ENCODE measurements at regions of chr2 and their contacts with region 1.

Region 1: GRCh38 chr2:166134252-166135151 is 6.7 kb upstream of the SCN1A start:
- DNase-seq: peak; percentile 100
- ATAC-seq: peak; percentile 97
- H3K4me3 ChIP-seq: peak overlapping the region in 2 of 3 experiments; percentile 28 to 42; a peak in 3 of 6 replicates
- H3K27ac ChIP-seq: peak overlapping the region; percentile 97
- H3K4me1 ChIP-seq: peaks cover 94% of the 10 kb centered on the region
- H3K27me3 ChIP-seq: no peaks in the 10 kb centered on the region
- CTCF ChIP-seq: no peak
- EP300 ChIP-seq: peak in 1 of 2 experiments; percentile 99; a peak in 3 of 4 replicates
- POLR2A ChIP-seq: peak; percentile 41 to 86; a peak in 3 of 4 replicates
- RAD21 ChIP-seq: no peak

Region 2: GRCh38 chr2:165474619-165475276 is 659.8 kb before region 1 on chr2:
- CTCF ChIA-PET with region 1: no interaction called
- POLR2A ChIA-PET with region 1: no interaction called
- in situ Hi-C with region 1: no loop called
- intact Hi-C with region 1: no loop called
- DNase-seq: no peak
- ATAC-seq: no peak
- H3K4me3 ChIP-seq: no peak overlapping the region
- H3K27ac ChIP-seq: no peak overlapping the region
- H3K4me1 ChIP-seq: no peaks in the 10 kb centered on the region
- H3K27me3 ChIP-seq: no peaks in the 10 kb centered on the region
- CTCF ChIP-seq: no peak
- EP300 ChIP-seq: no peak
- POLR2A ChIP-seq: no peak
- RAD21 ChIP-seq: no peak

Region 3: GRCh38 chr2:166158546-166158945 is 24.0 kb after region 1 on chr2:
- CTCF ChIA-PET with region 1: interaction called, 4 read pairs
- POLR2A ChIA-PET with region 1: interaction called, 198 read pairs
- in situ Hi-C with region 1: no loop called
- intact Hi-C with region 1: loop called (anchors 1 kb)
- DNase-seq: no peak
- ATAC-seq: no peak
- H3K4me3 ChIP-seq: no peak overlapping the region
- H3K27ac ChIP-seq: no peak overlapping the region
- H3K4me1 ChIP-seq: peaks cover 71% of the 10 kb centered on the region
- H3K27me3 ChIP-seq: no peaks in the 10 kb centered on the region
- CTCF ChIP-seq: no peak
- EP300 ChIP-seq: no peak
- POLR2A ChIP-seq: no peak
- RAD21 ChIP-seq: no peak

Region 4: GRCh38 chr2:166163775-166164174 is 29.3 kb after region 1 on chr2:
- CTCF ChIA-PET with region 1: no interaction called
- POLR2A ChIA-PET with region 1: interaction called, 15 read pairs
- in situ Hi-C with region 1: no loop called
- intact Hi-C with region 1: no loop called
- DNase-seq: peak; percentile 76
- ATAC-seq: peak; percentile 95
- H3K4me3 ChIP-seq: no peak overlapping the region
- H3K27ac ChIP-seq: peak overlapping the region; percentile 46
- H3K4me1 ChIP-seq: peaks cover 37% of the 10 kb centered on the region
- H3K27me3 ChIP-seq: no peaks in the 10 kb centered on the region
- CTCF ChIP-seq: no peak
- EP300 ChIP-seq: peak in 1 of 2 experiments; percentile 69; a peak in 1 of 4 replicates
- POLR2A ChIP-seq: no peak
- RAD21 ChIP-seq: no peak

Region 5: DNA sequence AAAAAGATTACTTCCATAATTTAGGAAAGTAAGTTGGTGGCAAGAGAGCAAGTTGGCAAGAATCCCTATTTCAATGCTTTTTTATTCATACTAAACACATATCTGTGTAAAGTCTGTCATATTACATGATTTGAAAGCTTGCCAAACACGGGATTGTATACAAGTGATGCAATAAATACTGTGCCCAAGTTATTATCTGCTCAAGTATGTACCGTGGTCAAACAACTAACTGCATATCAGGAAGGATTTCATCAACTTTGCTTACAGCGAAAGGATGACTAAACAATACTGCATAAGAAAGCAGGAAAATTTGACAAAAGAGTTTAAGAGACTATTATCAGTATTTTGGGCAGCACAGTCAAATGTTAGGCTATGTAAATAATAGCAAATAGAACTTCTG is 62.9 kb after region 1 on chr2:
- CTCF ChIA-PET with region 1: no interaction called
- POLR2A ChIA-PET with region 1: no interaction called
- in situ Hi-C with region 1: no loop called
- intact Hi-C with region 1: no loop called
- DNase-seq: peak; percentile 20
- ATAC-seq: no peak
- H3K4me3 ChIP-seq: no peak overlapping the region
- H3K27ac ChIP-seq: no peak overlapping the region
- H3K4me1 ChIP-seq: 0 out of 2 replicates have a peak, but pooled peaks cover 5% of the 10 kb centered on the region
- H3K27me3 ChIP-seq: no peaks in the 10 kb centered on the region
- CTCF ChIP-seq: no peak
- EP300 ChIP-seq: no peak
- POLR2A ChIP-seq: no peak
- RAD21 ChIP-seq: no peak

Region 6: GRCh38 chr2:166234112-166234846 is 99.8 kb after region 1 on chr2:
- CTCF ChIA-PET with region 1: no interaction called
- POLR2A ChIA-PET with region 1: interaction called, 17 read pairs
- in situ Hi-C with region 1: no loop called
- intact Hi-C with region 1: loop called (anchors 1 kb)
- DNase-seq: peak; percentile 58
- ATAC-seq: no peak
- H3K4me3 ChIP-seq: no peak overlapping the region
- H3K27ac ChIP-seq: peak overlapping the region; percentile 48
- H3K4me1 ChIP-seq: peaks cover 50% of the 10 kb centered on the region
- H3K27me3 ChIP-seq: no peaks in the 10 kb centered on the region
- CTCF ChIP-seq: no peak
- EP300 ChIP-seq: peak in 1 of 2 experiments; percentile 89; a peak in 2 of 4 replicates
- POLR2A ChIP-seq: no peak
- RAD21 ChIP-seq: no peak

Region 7: DNA sequence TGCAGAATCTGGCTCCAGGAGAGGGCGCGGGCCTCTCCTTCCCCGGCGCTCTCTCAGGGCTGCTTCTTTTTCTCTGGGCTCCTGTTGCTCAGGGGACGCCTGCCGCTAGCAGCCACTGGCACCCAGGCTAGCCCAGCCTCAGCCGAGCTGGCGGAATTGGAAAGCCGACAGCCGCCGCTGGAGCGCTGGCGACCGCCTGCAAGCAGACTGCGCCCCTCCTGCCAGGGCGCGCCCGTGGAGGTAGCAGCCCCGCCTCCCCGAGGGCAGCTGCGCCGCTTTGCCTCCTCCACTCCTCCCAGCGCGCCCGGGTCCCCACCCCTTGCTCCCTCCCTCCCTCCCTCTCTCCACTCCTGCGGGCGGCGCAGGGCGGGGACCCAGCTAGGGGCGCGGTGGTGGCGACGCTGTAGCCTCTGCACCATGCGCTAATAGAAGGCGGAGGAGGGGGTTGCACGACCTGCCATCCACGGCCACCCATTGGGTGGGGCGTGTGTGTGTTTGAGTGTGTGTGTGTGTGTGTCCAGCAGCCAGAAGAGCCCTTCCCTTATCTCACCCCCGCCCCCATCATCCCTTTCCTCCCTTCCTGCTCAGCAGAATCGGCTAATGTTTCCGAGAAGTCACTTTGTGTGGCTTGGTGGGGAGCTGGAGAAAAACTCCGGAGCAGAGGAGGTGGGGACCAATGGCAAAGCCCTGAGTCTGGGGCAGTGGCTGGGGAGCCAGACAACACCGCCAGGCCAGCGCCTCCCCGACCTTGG is 241.4 kb after region 1 on chr2 and contains the start of gene SCN9A:
- CTCF ChIA-PET with region 1: no interaction called
- POLR2A ChIA-PET with region 1: interaction called, 4 read pairs
- in situ Hi-C with region 1: no loop called
- intact Hi-C with region 1: loop called (anchors 2 kb)
- DNase-seq: peak; percentile 82
- ATAC-seq: peak; percentile 92
- H3K4me3 ChIP-seq: peak within 1 kb of the TSS; percentile 75 to 85 (median 82)
- H3K27ac ChIP-seq: peak within 1 kb of the TSS; percentile 68
- H3K4me1 ChIP-seq: peaks cover 48% of the 10 kb centered on the region
- H3K27me3 ChIP-seq: no peaks in the 10 kb centered on the region; a peak in 1 of 5 replicates
- CTCF ChIP-seq: peak; percentile 52
- EP300 ChIP-seq: peak in 1 of 2 experiments; percentile 18; a peak in 2 of 4 replicates
- POLR2A ChIP-seq: peak; percentile 84 to 90
- RAD21 ChIP-seq: peak; percentile 33; the same call in 1 of the 2 replicates
- total RNA-seq, gene SCN9A: 11.8 and 15.3 TPM in 2 replicates

Region 8: GRCh38 chr2:166675553-166675952 is 541.1 kb after region 1 on chr2:
- CTCF ChIA-PET with region 1: no interaction called
- POLR2A ChIA-PET with region 1: no interaction called
- in situ Hi-C with region 1: no loop called
- intact Hi-C with region 1: no loop called
- DNase-seq: no peak
- ATAC-seq: no peak
- H3K4me3 ChIP-seq: no peak overlapping the region
- H3K27ac ChIP-seq: no peak overlapping the region
- H3K4me1 ChIP-seq: no peaks in the 10 kb centered on the region
- H3K27me3 ChIP-seq: no peaks in the 10 kb centered on the region
- CTCF ChIP-seq: no peak
- EP300 ChIP-seq: no peak
- POLR2A ChIP-seq: no peak
- RAD21 ChIP-seq: no peak